ENCODE measurements at regions of chr2 and their contacts with region 1.

Region 1: DNA sequence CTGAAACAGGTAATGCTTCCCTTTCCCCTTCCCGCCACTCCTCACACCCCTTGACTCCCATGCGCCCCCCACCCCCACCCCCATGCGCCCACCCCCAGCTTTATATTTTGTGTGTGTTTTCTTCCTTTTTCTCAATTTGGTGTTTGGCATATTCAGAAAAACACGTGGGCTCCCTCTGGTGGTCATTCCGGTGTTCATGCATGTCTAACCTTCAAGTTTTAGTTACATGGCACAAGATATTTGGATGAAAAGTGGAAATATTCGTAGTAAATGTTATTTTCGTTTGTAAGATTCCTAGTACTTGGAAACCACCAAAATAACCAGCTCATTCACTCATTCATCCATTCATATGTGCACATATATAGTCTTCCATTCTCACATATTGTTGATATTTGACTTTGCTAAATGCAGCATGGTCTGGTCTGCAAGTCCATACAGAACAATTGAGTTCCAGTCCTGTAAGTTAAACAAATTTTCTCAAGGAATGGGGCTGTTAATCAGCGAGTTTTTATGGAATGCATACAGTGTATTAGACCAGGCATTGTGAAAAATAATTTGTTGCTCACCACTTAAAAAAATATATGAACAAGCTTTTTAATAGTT is 143.6 kb upstream of the MAP3K20 start:
- DNase-seq: peak; percentile 59
- ATAC-seq: peak; percentile 52

Region 2: GRCh38 chr2:172813314-172813888 is 118.6 kb before region 1 on chr2:
- intact Hi-C with region 1: loop called (anchors 2 kb)
- DNase-seq: no peak
- ATAC-seq: peak; percentile 52

Region 3: GRCh38 chr2:172864182-172864581 is 67.8 kb before region 1 on chr2:
- intact Hi-C with region 1: loop called (anchors 2 kb)
- DNase-seq: peak; percentile 69
- ATAC-seq: peak; percentile 75